Posterior cingulate gyrus (tissue), 11 donors: ENCODE measurements at regions of chr3 and their contacts with region 1.

Region 1: DNA sequence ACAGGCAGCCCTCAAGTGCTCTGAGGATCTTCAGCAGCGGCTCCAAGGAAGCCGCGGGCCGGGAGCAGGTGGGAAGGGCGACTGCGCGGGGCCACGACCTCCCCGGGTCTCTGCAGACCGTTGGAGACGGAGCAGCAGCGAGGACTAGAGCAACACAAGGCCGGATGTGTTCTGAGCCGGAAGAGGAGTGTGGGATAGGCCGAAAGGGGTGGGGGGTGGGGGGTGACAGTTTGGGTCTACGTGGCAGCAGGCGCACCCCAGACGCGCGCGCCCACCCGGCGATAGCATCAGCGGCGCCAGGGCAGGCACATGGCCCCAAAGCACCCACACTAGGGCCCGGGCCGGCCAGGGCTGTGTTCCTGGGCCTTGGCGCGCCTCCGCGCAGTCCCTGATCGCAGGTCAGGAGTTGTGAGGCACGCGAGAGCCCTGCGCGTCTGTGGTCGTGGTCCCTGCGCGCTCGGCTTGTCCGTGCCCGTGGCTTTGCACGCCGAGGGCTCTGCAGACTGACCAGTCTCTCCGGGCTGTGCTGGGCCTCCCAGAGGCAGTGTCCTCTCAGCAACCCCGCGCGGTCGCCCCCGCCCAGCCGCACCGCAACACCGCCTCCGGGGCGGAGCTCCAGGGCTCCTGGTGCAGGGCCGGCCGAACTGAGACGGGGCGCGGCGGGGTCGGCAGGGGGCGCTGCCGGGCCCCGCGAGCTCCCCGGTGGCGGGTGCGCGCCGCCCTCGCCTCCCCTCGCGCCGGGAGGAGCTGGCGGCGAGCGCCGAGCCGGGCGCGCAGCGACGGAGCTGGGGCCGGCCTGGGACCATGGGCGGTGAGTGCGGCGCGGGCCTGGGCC is at the start of gene PXYLP1:
- DNase-seq: peak; percentile 84 to 99 (median 92)

Region 2: GRCh38 chr3:141279077-141279967 is 48.0 kb after region 1 on chr3:
- intact Hi-C with region 1: loop called (anchors 2 kb)
- DNase-seq: no peak

Region 3: DNA sequence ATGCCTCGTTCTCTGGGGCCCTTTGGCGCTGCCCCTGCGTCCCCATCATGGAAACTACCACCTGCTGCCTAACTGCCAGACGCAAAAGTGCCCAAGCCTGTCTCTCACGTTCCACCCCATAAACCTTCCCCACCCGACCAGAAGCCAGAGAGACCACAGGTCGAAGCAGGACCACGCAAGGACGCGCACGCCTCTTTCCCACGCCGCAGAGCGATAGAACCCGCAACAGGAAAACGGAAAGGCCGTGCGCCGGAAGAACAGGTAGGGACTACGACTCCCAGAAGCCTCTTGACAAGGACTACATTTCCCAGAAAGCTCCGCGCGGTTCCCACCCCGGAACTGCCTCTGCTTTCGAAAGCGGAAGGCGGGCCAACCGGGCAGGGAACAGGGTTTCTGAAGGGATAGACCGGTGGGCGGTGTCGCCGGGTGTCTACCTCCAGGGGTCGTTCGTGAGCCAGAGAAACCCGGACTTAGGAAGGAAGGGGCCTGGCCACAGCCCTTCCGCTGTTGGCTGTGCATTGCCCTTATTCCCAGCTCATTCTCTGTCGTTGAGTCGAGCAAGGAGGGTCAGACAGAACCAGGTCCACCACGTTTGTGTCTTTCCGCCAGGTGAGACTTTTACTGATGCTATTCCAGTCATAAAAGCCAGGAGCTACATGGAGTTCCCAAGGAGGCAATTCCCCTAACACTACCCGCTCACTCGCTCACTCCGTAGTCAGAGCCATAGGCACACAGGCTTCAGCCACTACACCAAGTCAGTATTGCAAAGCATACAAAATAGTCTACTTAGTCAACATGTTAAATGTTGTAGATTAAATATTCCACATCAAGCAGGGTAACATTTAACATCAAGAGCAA is 80.4 kb after region 1 on chr3:
- intact Hi-C with region 1: loop called (anchors 5 kb)
- DNase-seq: peak; percentile 97 to 100 (median 99)

Region 4: DNA sequence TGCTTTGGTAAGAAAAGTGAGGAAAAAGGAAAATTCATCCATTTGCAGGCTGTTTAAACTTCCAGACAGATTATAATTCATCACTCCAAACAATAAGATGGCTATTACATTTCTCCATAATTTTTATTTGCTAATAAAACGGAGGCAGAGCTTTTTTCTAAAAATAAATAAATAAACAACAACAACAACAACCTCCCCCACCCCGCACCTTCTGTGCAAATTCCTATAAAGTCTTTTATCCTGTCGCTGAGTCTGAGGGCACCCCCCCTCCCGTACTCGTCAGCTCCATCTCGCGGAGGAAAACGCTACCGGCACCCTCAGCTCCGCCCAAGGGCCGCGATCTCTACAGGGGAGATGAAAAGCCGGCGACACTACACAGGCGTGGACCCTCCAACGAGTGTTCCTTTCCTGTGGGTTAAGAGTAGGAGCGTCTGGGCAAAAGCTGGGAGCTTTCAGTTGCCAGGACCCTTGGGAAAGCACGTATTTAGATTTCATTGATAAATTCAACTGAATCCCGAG is 644.1 kb after region 1 on chr3:
- intact Hi-C with region 1: loop called (anchors 10 kb)
- DNase-seq: peak; percentile 71 to 97 (median 86)